ENCODE measurements at regions of chr5 and their contacts with region 1.

Region 1: DNA sequence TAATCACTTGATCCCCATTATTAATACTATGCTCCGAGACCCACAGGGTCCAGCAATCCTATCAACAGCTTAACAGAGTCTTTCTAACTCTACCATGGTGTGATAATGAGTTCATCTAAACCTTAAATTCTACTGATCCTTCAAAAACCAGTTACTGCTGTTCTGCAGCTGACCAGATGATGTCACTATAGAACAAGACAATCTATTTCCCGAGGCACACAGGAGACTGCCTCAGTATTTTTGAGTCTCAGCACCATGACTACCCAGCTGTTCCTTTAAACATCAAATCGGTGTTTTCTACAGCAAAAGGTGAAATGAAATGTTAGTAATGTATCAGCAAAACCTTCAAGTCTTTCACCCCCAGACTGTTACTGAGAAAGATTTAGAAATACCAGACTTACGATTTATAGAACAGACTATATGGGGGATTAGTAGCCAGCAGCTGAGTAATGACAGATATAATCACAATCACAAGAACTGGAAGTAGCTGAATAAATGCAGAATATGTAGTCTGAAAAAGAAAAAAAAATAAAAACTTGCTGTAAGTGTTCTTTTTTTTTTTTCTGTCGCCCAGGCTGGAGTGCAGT is 16.9 kb downstream of the DNAJC18 start:
- DNase-seq: no peak
- ATAC-seq: peak; percentile 35 to 58
- H3K4me3 ChIP-seq: no peak overlapping the region
- H3K27ac ChIP-seq: no peak overlapping the region
- H3K4me1 ChIP-seq: peaks cover 3% of the 10 kb centered on the region
- H3K27me3 ChIP-seq: no peaks in the 10 kb centered on the region

Region 2: DNA sequence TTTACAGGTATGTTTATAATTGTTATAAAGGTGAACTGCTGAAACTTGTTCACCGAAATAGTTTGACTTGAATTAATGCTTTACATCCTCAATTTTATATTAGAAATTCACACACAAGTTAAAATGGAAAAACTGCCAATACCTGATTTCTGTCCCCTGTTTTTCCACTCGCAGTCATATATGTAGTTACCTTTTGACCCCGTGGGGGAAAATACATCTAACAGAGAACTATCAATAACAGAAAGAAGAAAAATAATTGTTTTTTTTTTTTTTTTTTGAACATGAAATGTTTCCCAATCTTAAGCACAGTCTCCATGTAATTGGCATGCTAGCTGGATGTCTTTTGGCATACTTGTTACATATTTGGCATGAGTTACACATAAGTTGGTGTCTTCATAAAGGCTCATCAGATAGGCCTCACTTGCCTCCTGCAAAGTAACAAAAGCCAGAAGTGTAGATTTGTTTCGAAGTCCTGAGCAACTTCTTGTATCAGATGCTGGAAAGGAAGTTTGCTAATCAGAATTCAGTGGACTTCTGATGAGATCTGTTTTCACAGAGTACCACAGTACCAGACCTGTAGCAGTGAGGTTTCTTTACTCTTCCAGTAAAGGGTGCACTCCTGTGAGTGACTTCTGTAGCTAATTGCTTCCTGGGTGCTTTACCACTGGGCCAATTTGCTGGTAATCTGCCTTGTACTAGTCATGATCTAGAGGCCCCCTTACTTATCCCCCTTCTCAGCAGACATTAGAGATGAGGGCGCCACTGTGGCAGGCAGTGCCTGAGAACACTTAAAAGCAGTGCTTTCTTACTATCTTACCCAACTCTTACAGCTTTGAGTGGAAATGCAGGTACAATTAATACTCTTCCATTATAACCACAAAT is 189.5 kb after region 1 on chr5:
- intact Hi-C with region 1: loop called in 1 of 4 experiments (anchors 10 kb)
- DNase-seq: no peak
- ATAC-seq: no peak
- H3K4me3 ChIP-seq: no peak overlapping the region
- H3K27ac ChIP-seq: no peak overlapping the region
- H3K4me1 ChIP-seq: no peaks in the 10 kb centered on the region
- H3K27me3 ChIP-seq: no peaks in the 10 kb centered on the region